ENCODE measurements at regions of chr6 and their contacts with region 1.

Region 1: GRCh38 chr6:41779793-41780545 is at the start of gene FRS3:
- DNase-seq: peak; percentile 99
- ATAC-seq: peak; percentile 97
- total RNA-seq, gene FRS3: 5.1 TPM

Region 2: GRCh38 chr6:41602864-41603608 is 176.9 kb before region 1 on chr6:
- intact Hi-C with region 1: loop called (anchors 5 kb)
- DNase-seq: peak; percentile 85
- ATAC-seq: peak; percentile 77

Region 3: GRCh38 chr6:41735427-41736356 is 44.3 kb before region 1 on chr6 and contains the start of gene TFEB:
- intact Hi-C with region 1: loop called (anchors 2 kb)
- DNase-seq: peak; percentile 98
- ATAC-seq: peak; percentile 70
- total RNA-seq, gene TFEB: 39.5 TPM

Region 4: GRCh38 chr6:42043787-42044475 is 264.0 kb after region 1 on chr6:
- intact Hi-C with region 1: loop called (anchors 1 kb)
- DNase-seq: peak; percentile 90
- ATAC-seq: peak; percentile 67